Gastrocnemius medialis (tissue), 4 donors: ENCODE measurements at regions of chr20 and their contacts with region 1.

Region 1: GRCh38 chr20:31951530-31952453 is at the start of gene PDRG1:
- DNase-seq: peak; percentile 90 to 93
- ATAC-seq: peak; percentile 95 to 97
- H3K4me3 ChIP-seq: peak within 1 kb of the TSS; percentile 87 to 99 (median 90)
- H3K27ac ChIP-seq: peak within 1 kb of the TSS; percentile 83 to 92 (median 86)
- H3K4me1 ChIP-seq: peaks cover 10 to 11% of the 10 kb centered on the region in 2 donors
- H3K27me3 ChIP-seq: no peaks in the 10 kb centered on the region
- CTCF ChIP-seq: peak; percentile 83 to 97 (median 89)
- POLR2A ChIP-seq: peak; percentile 72 to 77
- total RNA-seq, gene PDRG1: 7.0 to 12.9 (median 9.6) TPM

Region 2: GRCh38 chr20:31849455-31849925 is 102.3 kb before region 1 on chr20:
- in situ Hi-C with region 1: loop called in 3 of 4 experiments (anchors 10 kb)
- intact Hi-C with region 1: loop called (anchors 1 kb)
- DNase-seq: no peak
- ATAC-seq: no peak
- H3K4me3 ChIP-seq: no peak overlapping the region
- H3K27ac ChIP-seq: no peak overlapping the region
- H3K4me1 ChIP-seq: peaks cover 3 to 11% of the 10 kb centered on the region in 2 donors
- H3K27me3 ChIP-seq: peaks cover 0 to 9% (median 4%) of the 10 kb centered on the region in 3 donors
- CTCF ChIP-seq: no peak
- POLR2A ChIP-seq: no peak

Region 3: DNA sequence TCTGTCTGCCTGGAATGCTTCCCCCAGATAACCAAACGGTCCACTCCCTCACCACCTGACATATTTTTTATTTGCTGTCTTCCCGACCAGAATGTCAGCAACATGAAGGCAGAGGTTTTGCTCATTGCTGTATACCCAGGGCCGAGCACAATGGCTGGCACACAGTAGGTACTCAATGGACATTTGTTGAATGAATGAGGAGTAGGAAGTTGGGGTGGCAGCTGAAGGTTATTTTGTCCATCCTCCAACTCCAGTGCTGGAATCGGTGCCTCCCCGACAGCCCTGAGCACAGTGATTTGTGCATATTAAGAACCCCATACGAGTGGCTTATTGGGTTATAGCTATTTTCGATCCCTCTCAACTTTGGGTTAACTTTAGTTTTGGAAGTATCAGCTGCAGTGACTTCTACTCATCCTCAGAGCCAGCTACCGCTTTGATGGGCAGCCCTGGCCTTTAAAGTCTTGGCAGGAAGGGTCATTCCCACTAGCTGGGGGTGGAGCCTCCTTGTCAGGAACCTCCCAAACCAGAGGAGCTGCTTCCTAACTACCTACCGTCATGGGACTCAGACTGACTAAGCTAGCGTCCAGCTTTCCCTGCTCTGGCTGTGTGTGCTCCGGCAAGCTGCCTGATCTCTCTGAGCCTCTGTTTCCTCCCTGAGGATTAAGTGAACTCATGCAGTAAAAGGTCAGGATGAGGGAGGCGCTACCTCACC is 91.6 kb before region 1 on chr20:
- in situ Hi-C with region 1: loop called (anchors 5 to 10 kb)
- intact Hi-C with region 1: no loop called
- DNase-seq: no peak
- ATAC-seq: no peak
- H3K4me3 ChIP-seq: peak overlapping the region in 1 of 4 donors; percentile 56
- H3K27ac ChIP-seq: no peak overlapping the region
- H3K4me1 ChIP-seq: peaks cover 4 to 13% of the 10 kb centered on the region in 2 donors
- H3K27me3 ChIP-seq: peaks cover 27 to 42% (median 32%) of the 10 kb centered on the region in 3 donors
- CTCF ChIP-seq: no peak
- POLR2A ChIP-seq: no peak

Region 4: DNA sequence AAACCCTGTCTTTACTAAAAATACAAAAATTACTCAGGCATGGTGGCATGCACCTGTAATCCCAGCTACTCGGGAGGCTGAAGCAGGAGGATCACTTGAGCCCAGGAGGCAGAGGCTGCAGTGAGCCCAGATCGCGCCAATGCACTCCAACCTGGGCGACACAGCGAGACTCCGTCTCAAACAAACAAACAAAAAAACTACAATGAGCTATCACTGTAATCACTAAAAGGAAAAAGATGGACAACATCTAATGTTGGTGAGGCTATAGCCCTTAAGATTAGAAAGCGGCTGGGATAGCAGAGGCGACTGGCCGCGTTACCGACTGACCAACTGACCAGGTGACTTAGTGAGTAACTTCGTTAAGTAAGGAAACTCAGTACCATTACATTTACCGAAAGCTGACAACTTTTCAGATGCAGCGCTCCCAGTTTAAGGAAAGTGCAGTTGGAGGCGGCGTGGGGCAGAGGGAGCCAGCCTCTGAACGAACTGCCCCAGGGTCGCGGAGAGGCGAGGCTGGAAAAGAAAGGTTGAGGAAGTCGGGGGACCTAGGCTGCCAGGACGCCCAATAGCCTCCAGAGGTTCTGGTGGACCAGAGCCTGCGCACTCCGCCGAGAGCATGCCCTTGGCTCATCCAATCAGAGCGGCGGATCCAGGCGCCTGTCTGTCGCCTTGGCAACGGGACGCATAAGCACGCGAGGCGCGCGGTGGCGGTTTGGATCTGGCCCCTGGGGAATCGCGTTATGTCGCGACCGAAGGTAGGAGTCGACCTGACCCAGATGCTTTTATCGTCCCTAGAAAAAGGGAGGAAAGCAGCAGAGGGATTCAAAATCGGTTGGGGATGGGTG is 72.4 kb before region 1 on chr20:
- in situ Hi-C with region 1: no loop called
- intact Hi-C with region 1: loop called (anchors 2 kb)
- DNase-seq: peak; percentile 82 to 86
- ATAC-seq: peak; percentile 89 to 96
- H3K4me3 ChIP-seq: peak overlapping the region; percentile 59 to 69 (median 62)
- H3K27ac ChIP-seq: peak overlapping the region; percentile 36 to 68 (median 54)
- H3K4me1 ChIP-seq: no peaks in the 10 kb centered on the region
- H3K27me3 ChIP-seq: peaks cover 0 to 8% (median 0%) of the 10 kb centered on the region in 3 donors
- CTCF ChIP-seq: peak in 1 of 5 experiments; percentile 15
- POLR2A ChIP-seq: peak in 1 of 2 donors; percentile 21

Region 5: GRCh38 chr20:31990641-31991338 is 39.0 kb after region 1 on chr20:
- in situ Hi-C with region 1: no loop called
- intact Hi-C with region 1: no loop called
- DNase-seq: no peak
- ATAC-seq: no peak
- H3K4me3 ChIP-seq: no peak overlapping the region
- H3K27ac ChIP-seq: no peak overlapping the region
- H3K4me1 ChIP-seq: no peaks in the 10 kb centered on the region
- H3K27me3 ChIP-seq: peaks cover 10 to 15% (median 14%) of the 10 kb centered on the region in 3 donors
- CTCF ChIP-seq: no peak
- POLR2A ChIP-seq: no peak